Mammary epithelial cell (primary cell): ENCODE measurements at regions of chr2 and their contacts with region 1.

Region 1: DNA sequence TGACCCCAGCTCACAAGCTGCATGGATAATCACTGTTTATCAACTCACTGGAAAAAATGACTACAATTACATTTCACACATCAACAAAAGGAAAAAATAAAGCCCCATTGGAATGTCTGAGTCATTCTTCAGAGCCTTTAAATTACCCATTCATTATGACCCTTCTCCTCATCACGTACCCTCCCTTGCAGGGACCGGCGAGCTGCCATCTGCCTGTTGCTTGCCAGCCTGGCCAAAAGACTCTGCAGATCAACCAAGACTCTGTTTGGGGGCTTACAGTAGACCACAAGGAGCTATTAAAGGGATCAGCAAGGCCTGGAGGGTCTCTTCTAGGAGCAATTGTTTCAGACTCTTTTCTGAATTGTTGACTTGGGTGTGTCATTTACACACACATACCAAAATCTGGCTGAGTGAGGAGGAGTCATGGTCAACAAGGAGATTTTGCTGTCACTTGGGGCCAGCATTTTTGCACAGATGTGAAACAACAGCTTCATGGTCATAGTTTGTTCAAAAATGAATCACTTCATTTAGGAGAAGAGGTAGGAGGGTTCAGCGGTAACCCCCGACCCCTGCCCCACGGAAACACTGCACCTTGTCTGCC is 42.0 kb downstream of the LBH start:
- DNase-seq: no peak
- H3K4me3 ChIP-seq: no peak overlapping the region
- H3K27ac ChIP-seq: no peak overlapping the region
- H3K4me1 ChIP-seq: peaks cover 27% of the 10 kb centered on the region
- H3K27me3 ChIP-seq: no peaks in the 10 kb centered on the region
- CTCF ChIP-seq: no peak

Region 2: GRCh38 chr2:30231212-30231995 is 42.0 kb before region 1 on chr2 and contains the start of gene LBH:
- CTCF ChIA-PET with region 1: no interaction called
- dilution Hi-C with region 1: no loop called
- in situ Hi-C with region 1: no loop called
- intact Hi-C with region 1: loop called (anchors 1 kb)
- DNase-seq: peak; percentile 73
- H3K4me3 ChIP-seq: peak within 1 kb of the TSS; percentile 50 to 52 (median 52)
- H3K27ac ChIP-seq: no peak within 1 kb of the TSS
- H3K4me1 ChIP-seq: peaks cover 34% of the 10 kb centered on the region
- H3K27me3 ChIP-seq: no peaks in the 10 kb centered on the region
- CTCF ChIP-seq: no peak
- total RNA-seq, gene LBH: 1.2 to 56.5 TPM